ENCODE measurements at regions of chr5 and their contacts with region 1.

Region 1: GRCh38 chr5:159987031-159987674 is 21.8 kb upstream of the TTC1 start:
- DNase-seq: peak; percentile 83

Region 2: DNA sequence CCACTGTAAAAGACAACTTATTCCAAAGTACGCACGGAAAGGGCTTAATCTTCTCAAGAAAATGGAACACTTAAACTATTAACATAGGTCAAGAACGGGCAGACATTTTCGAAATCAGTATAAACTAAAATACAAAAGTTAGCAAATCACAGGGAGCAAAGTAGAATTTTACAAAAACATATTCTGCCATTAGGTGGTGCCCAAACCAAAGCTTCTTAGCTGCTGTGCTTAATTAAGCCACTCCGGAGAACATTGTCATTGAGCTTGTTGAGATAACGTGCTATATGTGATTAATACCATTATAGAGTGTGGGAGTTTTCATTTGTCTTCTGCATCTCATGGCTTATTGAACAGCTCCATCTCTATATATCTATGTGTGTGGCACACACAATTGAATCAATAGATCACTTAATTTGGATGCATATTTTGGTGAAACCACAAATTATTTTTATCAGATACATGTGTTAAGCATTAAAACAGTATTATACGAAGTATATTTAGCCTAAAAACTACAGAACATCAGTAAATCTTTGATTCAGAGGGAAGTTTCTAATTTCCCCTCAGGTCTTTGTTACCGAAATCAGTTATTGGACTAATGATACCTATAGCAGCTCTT is 700.6 kb before region 1 on chr5:
- intact Hi-C with region 1: loop called (anchors 10 kb)
- DNase-seq: no peak

Region 3: DNA sequence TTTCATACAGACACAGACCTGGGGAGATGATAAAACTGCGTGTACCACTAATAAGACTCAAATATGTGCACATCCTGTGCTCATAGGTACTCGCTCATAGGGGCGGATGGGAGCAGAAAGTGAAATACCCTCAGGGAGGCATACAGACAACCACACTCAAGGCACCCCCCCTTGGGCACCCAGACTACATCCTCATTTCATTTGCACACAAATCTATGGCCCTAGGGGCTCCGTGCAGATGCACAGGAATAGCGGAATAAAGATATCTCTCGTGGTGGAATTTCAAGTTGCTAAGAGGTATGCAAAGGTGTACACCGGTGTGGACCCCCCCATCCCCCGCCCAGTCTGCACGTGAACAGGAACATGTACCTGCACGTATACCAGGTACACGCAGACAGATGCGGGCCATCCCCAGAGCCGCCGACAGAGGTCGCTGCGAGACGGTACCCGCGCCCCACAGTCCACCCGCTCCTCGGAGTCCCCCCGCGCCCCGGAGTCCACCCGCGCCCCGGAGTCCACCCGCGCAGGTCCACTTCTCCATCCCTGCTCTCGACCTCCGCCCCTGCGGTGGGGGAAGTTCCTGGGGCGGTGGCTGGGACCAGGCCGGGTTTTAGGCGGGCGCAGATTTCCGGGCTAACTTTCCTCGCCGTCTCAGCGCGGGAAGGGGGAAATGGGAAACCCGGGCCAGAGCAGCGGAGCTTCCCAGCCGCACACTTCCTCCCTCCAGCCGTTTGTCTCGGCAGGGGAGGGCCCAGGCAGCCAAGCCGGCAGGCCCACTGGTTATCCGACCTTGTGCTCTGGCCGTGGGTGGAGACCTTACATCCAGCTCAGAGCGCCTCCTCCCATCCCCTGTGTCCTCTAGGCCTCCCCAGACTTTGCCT is 655.8 kb before region 1 on chr5:
- intact Hi-C with region 1: loop called (anchors 5 kb)
- DNase-seq: peak; percentile 85